Right cardiac atrium (tissue), 5 donors: ENCODE measurements at regions of chr14 and their contacts with region 1.

Region 1: DNA sequence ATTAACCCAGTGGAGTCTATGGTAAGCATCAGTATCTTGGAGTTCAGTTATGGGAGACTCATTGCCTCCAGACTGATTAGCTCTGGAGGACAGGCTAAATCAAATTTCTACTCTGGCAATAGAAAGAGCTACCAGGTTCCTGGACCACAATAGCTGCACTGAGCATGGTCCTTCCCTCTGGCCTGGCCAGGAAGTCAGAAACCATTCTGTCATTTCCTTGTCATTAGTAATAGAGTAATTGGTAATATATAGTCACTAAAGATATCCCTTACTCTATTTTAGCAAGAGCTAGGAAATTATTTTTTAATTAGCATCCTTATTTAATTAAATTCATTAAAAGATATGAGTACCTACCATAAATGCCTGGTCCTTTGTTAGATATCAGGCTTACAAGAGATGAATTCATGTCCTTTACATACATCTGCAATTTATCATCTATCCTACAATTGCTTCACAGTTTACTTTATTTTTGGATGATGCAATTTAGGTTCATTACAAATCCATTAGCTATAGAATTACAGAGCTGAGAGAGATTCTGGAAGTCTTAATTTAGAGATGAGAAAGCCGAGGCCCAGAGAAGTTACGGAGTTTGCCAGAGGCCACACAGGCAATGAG is 23.7 kb upstream of the TDRD9 start:
- DNase-seq: no peak
- ATAC-seq: no peak
- H3K4me3 ChIP-seq: no peak overlapping the region
- H3K27ac ChIP-seq: no peak overlapping the region
- H3K4me1 ChIP-seq: no peaks in the 10 kb centered on the region
- H3K27me3 ChIP-seq: no peaks in the 10 kb centered on the region

Region 2: GRCh38 chr14:103808403-103809001 is 96.1 kb before region 1 on chr14:
- intact Hi-C with region 1: loop called in 2 of 4 experiments (anchors 5 to 10 kb)
- DNase-seq: peak; percentile 70 to 89 (median 85)
- ATAC-seq: peak; percentile 78 to 82
- H3K4me3 ChIP-seq: no peak overlapping the region
- H3K27ac ChIP-seq: no peak overlapping the region
- H3K4me1 ChIP-seq: peaks cover 4% of the 10 kb centered on the region
- H3K27me3 ChIP-seq: no peaks in the 10 kb centered on the region